GM12878 (cell line): ENCODE measurements at regions of chr20 and their contacts with region 1.

Region 1: DNA sequence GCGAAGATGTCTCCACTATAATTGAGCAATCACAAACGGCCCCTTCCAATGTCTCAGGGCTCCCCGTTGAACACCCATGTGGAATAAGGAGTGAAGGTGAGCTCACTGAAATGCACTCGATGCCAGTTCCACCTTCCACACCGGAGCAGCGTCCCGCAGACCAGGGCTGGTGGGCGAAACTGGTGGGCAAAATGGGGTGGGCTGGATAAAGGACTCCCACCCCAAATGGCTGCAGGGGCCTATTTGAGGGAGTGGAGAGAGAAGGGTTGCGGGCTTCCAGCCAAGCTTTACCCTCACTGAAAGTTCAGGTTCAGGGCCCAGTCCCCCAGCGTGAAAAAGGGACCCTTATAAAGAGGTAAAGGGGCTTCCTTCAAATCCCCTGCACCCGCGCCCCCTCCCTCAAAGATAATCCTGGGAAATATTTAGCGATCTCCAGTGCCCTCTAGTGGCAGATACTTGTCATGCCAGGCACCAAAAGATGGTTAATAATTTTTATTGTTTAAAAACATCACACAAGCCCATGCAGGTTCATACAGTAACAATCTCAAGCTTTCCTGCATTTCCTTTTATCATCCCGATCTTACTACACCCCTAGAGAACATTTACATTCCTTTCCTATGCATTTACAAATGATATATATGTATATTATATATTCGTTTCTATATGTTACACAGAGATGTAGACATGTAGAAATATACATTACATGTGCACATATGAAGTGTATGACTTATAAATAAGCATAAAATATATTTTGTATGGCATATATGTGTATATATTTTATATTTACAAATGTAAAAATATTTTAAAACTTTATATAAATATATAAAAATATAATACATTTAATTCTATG is 58.2 kb upstream of the NKX2-2 start:
- DNase-seq: no peak
- ATAC-seq: peak; percentile 38; the same call in 2 of the 3 replicates
- H3K4me3 ChIP-seq: no peak overlapping the region
- H3K27ac ChIP-seq: no peak overlapping the region
- H3K4me1 ChIP-seq: no peaks in the 10 kb centered on the region
- H3K27me3 ChIP-seq: peaks cover 0 to 3% of the 10 kb centered on the region in 2 experiments; a peak in 2 of 4 replicates
- CTCF ChIP-seq: peak; percentile 72 to 85 (median 79)
- EP300 ChIP-seq: no peak
- POLR2A ChIP-seq: no peak
- RAD21 ChIP-seq: peak; percentile 77

Region 2: DNA sequence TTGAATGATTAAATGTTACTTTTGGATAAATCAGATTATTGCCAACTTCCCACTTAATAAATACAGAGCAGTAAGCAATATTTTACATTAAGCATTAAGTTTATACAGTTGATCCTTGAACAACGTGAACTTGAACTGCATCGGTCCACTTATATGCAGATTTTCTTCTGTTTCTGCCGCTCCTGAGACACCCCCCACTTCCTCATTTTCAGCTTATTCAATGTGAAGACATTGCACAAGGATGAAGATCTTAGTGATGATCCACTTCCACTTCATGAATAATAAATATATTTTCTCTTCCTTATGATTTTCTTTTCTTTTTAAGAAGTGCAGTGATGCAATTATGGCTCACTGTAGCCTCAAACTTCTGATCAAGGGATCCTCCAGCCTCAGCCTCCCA is 633.1 kb before region 1 on chr20:
- CTCF ChIA-PET with region 1: no interaction called
- POLR2A ChIA-PET with region 1: no interaction called
- RAD21 ChIA-PET with region 1: no interaction called
- SMC1A ChIA-PET with region 1: no interaction called
- in situ Hi-C with region 1: no loop called
- intact Hi-C with region 1: no loop called
- DNase-seq: no peak
- ATAC-seq: no peak
- H3K4me3 ChIP-seq: no peak overlapping the region
- H3K27ac ChIP-seq: no peak overlapping the region
- H3K4me1 ChIP-seq: no peaks in the 10 kb centered on the region
- H3K27me3 ChIP-seq: no peaks in the 10 kb centered on the region; a peak in 1 of 4 replicates
- CTCF ChIP-seq: no peak
- EP300 ChIP-seq: no peak
- POLR2A ChIP-seq: no peak
- RAD21 ChIP-seq: no peak

Region 3: GRCh38 chr20:21523281-21523868 is 48.7 kb before region 1 on chr20:
- CTCF ChIA-PET with region 1: interaction called, 18 read pairs
- POLR2A ChIA-PET with region 1: no interaction called
- RAD21 ChIA-PET with region 1: interaction called, 18 read pairs
- SMC1A ChIA-PET with region 1: interaction called, 131 read pairs
- in situ Hi-C with region 1: loop called (anchors 10 kb)
- intact Hi-C with region 1: no loop called
- DNase-seq: no peak
- ATAC-seq: no peak
- H3K4me3 ChIP-seq: no peak overlapping the region
- H3K27ac ChIP-seq: no peak overlapping the region
- H3K4me1 ChIP-seq: no peaks in the 10 kb centered on the region
- H3K27me3 ChIP-seq: peaks cover 7 to 22% of the 10 kb centered on the region in 2 experiments
- CTCF ChIP-seq: no peak
- EP300 ChIP-seq: no peak
- POLR2A ChIP-seq: no peak
- RAD21 ChIP-seq: no peak

Region 4: GRCh38 chr20:21539511-21539910 is 32.6 kb before region 1 on chr20:
- CTCF ChIA-PET with region 1: interaction called, 19 read pairs
- POLR2A ChIA-PET with region 1: interaction called, 3 read pairs
- RAD21 ChIA-PET with region 1: interaction called, 16 read pairs
- SMC1A ChIA-PET with region 1: interaction called, 15 read pairs
- in situ Hi-C with region 1: no loop called
- intact Hi-C with region 1: no loop called
- DNase-seq: no peak
- ATAC-seq: no peak
- H3K4me3 ChIP-seq: no peak overlapping the region
- H3K27ac ChIP-seq: no peak overlapping the region
- H3K4me1 ChIP-seq: no peaks in the 10 kb centered on the region
- H3K27me3 ChIP-seq: no peaks in the 10 kb centered on the region; a peak in 1 of 4 replicates
- CTCF ChIP-seq: no peak
- EP300 ChIP-seq: no peak
- POLR2A ChIP-seq: no peak
- RAD21 ChIP-seq: no peak

Region 5: DNA sequence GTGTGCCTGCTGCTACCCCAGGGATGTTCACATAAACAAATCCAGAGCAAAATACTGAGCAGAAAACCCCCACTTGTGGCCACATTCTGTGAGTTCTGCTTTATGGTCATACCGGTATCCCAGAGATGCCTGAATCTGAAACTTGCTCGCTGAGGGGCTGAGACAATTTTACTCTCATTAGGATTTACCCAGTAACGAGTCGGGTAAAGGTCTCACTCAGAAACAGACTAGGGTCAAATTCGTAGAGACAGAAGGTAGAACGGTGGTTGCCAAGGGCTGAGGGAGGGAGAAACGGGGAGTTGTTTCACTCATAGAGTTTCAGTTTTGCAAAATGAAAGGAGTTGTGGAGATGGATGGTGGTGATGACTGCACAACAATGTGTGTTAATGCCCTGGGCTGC is 12.8 kb before region 1 on chr20:
- CTCF ChIA-PET with region 1: interaction called, 56 read pairs
- POLR2A ChIA-PET with region 1: interaction called, 4 read pairs
- RAD21 ChIA-PET with region 1: interaction called, 19 read pairs
- SMC1A ChIA-PET with region 1: interaction called, 22 read pairs
- in situ Hi-C with region 1: no loop called
- intact Hi-C with region 1: no loop called
- DNase-seq: peak; percentile 48
- ATAC-seq: peak; percentile 85
- H3K4me3 ChIP-seq: 0 out of 2 replicates have a peak overlapping the region, but pooled peaks have one; percentile 17
- H3K27ac ChIP-seq: no peak overlapping the region
- H3K4me1 ChIP-seq: peaks cover 4% of the 10 kb centered on the region; the same call in 1 of the 2 replicates
- H3K27me3 ChIP-seq: no peaks in the 10 kb centered on the region
- CTCF ChIP-seq: no peak
- EP300 ChIP-seq: no peak
- POLR2A ChIP-seq: no peak
- RAD21 ChIP-seq: no peak

Region 6: GRCh38 chr20:21615617-21616080 is 43.6 kb after region 1 on chr20:
- CTCF ChIA-PET with region 1: interaction called, 38 read pairs
- POLR2A ChIA-PET with region 1: no interaction called
- RAD21 ChIA-PET with region 1: interaction called, 10 read pairs
- SMC1A ChIA-PET with region 1: interaction called, 6 read pairs
- in situ Hi-C with region 1: no loop called
- intact Hi-C with region 1: no loop called
- DNase-seq: no peak
- ATAC-seq: peak; percentile 94
- H3K4me3 ChIP-seq: no peak overlapping the region
- H3K27ac ChIP-seq: no peak overlapping the region
- H3K4me1 ChIP-seq: no peaks in the 10 kb centered on the region
- H3K27me3 ChIP-seq: no peaks in the 10 kb centered on the region
- CTCF ChIP-seq: peak; percentile 78 to 87 (median 79)
- EP300 ChIP-seq: no peak
- POLR2A ChIP-seq: no peak
- RAD21 ChIP-seq: peak; percentile 73

Region 7: GRCh38 chr20:21640561-21641182 is 68.6 kb after region 1 on chr20:
- CTCF ChIA-PET with region 1: no interaction called
- POLR2A ChIA-PET with region 1: no interaction called
- RAD21 ChIA-PET with region 1: no interaction called
- SMC1A ChIA-PET with region 1: no interaction called
- in situ Hi-C with region 1: no loop called
- intact Hi-C with region 1: no loop called
- DNase-seq: no peak
- ATAC-seq: peak; percentile 47; the same call in 1 of the 3 replicates
- H3K4me3 ChIP-seq: no peak overlapping the region
- H3K27ac ChIP-seq: no peak overlapping the region
- H3K4me1 ChIP-seq: no peaks in the 10 kb centered on the region
- H3K27me3 ChIP-seq: no peaks in the 10 kb centered on the region
- CTCF ChIP-seq: peak in 2 of 3 experiments; percentile 16 to 19; a peak in 2 of 6 replicates
- EP300 ChIP-seq: no peak
- POLR2A ChIP-seq: no peak
- RAD21 ChIP-seq: 0 out of 2 replicates have a peak, but pooled peaks have one; percentile 14